Left cardiac atrium (tissue), 4 donors: ENCODE measurements at regions of chr2 and their contacts with region 1.

Region 1: DNA sequence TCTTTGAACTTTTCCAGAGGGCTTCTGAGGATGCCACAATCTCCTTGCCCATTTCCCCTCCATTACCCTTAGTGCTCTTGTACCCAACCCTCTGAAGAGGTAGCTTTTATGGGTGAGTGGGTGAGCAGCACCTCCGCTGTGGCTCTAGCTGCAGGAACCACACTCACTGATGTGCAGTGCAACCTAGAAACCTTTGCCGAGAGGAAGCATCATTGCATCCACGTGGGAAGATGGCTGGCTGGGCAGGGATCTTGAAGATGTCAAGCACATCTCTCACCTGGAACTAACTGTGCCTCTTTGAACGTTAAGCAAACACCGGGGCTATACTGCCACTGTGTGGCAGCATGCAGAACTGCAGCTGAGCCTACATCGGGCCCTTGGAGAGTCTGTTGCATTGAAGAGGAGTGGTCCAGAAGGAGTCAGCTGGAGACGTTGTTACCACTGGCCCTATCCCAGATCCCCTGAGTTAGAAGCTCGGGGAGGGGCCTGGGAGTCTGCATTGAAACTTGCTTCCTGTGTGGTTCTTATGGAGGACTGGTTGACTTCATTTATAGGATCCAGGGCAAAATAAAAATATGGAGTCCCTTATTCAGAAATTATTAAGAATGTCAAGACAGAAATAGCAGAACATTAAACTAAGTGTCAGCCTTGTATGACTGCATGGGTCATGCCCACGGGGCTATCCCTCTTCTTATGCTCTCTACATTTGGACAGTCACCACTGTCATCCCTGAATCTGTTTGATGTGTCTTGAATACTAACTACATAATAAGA is 28.7 kb downstream of the IGFBP5 start:
- DNase-seq: peak; percentile 54
- ATAC-seq: peak; percentile 62 to 69

Region 2: GRCh38 chr2:216426938-216427337 is 239.7 kb before region 1 on chr2:
- intact Hi-C with region 1: loop called in 1 of 2 experiments (anchors 10 kb)
- DNase-seq: no peak
- ATAC-seq: peak; percentile 46 to 68

Region 3: DNA sequence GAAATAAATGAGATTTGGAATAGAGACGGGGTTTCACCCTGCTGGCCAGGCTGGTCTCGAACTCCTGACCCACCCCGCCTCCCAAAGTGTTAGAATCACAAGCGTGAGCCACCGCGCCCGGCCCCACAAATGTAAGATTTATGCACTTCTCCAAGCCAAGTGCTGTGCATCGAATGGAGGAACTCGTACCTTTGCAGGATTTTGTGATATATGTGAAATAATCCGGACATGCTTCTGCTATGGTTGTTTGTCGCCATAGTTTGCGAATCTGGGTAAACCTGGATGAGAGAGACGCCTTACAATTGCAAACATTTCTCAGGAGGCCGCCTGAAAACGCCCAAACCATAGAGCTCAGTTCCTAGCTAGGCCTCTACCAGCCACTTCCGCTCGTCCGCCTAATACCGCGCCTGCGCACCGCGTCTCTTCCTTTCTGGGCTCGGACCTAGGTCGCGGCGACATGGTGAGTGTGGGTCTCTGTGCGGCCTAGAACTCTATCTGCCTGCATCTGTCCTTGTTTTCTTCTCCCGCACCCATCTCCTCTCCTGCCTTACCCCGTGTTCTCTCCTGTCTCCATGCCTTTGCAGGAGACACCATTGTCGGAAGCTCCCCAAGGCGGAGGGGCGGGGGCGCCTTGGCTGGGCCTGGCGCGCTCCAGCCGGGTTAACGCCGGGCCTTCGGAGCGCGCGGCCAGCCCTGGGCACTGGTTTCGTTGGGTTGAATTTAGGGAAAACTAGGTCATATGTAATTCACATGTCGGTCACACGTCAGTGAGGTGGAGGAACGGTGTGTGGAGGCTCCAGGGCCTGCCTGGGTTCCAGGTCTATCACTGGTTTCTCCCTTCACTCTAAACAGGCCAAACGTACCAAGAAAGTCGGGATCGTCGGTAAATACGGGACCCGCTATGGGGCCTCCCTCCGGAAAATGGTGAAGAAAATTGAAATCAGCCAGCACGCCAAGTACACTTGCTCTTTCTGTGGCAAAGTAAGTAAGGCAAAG is 167.9 kb before region 1 on chr2 and contains the start of gene RPL37A:
- intact Hi-C with region 1: no loop called
- DNase-seq: peak; percentile 95
- ATAC-seq: peak; percentile 97 to 98
- total RNA-seq, gene RPL37A: 1,877 to 1,963 TPM

Region 4: GRCh38 chr2:216519154-216519762 is 147.4 kb before region 1 on chr2:
- intact Hi-C with region 1: loop called (anchors 1 to 2 kb)
- DNase-seq: peak; percentile 62
- ATAC-seq: peak; percentile 83 to 88